ENCODE measurements at regions of chr11 and their contacts with region 1.

Region 1: DNA sequence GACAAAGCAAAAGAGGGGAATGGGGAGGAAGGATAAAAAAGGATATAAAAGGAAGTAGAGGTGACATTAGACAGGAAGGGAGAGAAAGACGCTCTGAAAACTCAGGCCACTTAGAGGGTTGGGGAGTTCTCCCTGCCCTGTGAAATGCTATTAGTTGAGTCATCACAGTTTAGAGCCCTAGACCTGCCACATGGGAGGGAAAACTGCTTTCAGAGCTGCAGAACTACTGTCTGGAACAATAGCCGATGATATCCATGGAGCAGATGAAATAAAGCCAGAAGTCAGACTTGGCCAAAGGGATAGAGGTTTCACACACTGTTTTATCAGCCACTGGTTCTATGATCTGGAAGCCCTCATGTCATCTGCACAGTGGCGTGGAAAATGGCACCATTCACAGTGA is 157.9 kb downstream of the NCAM1 start:
- DNase-seq: no peak

Region 2: GRCh38 chr11:113148652-113149051 is 29.6 kb after region 1 on chr11:
- intact Hi-C with region 1: loop called in 1 of 2 experiments (anchors 1 kb)
- DNase-seq: no peak

Measured in posterior vena cava (tissue), 2 donors.